ENCODE measurements at regions of chr18 and their contacts with region 1.

Region 1: DNA sequence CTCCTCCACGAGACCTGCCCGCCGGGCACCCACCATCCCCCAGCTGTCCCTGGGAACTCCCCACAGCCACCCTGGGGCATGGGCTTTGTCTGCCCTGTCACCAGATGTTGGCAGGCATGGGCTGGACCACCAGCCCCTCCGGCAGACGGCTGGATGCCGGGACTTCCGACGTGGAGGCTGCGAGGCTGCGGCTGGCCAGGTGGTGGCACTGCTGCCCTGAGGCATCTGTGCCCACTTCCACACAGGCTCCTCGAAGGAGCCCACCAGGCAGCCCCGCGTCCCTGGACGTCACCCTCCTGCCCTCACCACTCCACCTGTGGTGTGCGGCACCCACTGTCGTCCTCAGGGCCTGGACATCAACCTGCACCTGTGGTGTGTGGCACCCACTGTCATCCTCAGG is 319.9 kb upstream of the SALL3 start:
- DNase-seq: no peak
- H3K4me3 ChIP-seq: no peak overlapping the region
- H3K27ac ChIP-seq: no peak overlapping the region
- H3K27me3 ChIP-seq: peaks cover 0 to 19% (median 0%) of the 10 kb centered on the region in 45 donors
- CTCF ChIP-seq: peak in 54 of 56 donors; percentile 29 to 76 (median 60)

Region 2: DNA sequence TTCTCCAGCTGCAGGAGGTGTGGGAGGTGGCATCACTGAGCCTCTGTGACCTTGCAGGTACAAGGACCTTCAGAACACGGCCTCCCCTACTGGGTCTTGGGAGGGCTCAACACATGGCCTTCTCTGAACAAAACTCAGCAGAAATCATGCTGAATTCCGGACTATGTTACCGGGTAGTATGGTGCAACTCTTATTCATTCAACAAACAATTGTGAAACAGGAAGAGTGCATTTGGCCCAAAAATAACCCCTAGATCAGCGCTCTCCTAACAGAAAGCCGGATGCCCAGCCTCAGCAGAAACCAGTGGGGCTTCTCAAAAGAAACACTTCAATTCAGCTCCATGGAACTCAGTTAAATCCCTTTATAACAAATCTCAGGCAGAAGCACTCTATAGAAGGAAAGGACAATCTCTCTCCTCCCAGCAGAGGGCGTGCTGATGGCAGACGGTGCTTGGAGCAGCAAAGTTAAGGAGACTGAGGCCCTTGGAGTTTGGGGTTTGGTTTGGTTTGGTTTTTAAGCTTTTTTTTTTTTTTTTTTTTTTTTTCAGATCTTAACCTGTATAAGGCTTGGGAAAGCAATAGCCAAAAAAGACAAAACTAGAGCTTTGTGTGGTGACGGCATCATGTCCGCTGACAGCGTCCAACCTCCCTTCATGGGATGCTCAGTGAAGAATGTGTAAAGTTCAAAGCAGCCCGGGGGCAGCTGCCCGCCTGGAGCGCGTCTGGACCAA is 215.7 kb after region 1 on chr18:
- intact Hi-C with region 1: loop called in 1 of 2 experiments (anchors 10 kb)
- DNase-seq: peak in 3 of 10 donors; percentile 24 to 51 (median 40)
- H3K4me3 ChIP-seq: no peak overlapping the region
- H3K27ac ChIP-seq: no peak overlapping the region
- H3K27me3 ChIP-seq: peaks cover 0 to 9% (median 0%) of the 10 kb centered on the region in 45 donors
- CTCF ChIP-seq: peak in 54 of 56 donors; percentile 12 to 65 (median 46)

Region 3: DNA sequence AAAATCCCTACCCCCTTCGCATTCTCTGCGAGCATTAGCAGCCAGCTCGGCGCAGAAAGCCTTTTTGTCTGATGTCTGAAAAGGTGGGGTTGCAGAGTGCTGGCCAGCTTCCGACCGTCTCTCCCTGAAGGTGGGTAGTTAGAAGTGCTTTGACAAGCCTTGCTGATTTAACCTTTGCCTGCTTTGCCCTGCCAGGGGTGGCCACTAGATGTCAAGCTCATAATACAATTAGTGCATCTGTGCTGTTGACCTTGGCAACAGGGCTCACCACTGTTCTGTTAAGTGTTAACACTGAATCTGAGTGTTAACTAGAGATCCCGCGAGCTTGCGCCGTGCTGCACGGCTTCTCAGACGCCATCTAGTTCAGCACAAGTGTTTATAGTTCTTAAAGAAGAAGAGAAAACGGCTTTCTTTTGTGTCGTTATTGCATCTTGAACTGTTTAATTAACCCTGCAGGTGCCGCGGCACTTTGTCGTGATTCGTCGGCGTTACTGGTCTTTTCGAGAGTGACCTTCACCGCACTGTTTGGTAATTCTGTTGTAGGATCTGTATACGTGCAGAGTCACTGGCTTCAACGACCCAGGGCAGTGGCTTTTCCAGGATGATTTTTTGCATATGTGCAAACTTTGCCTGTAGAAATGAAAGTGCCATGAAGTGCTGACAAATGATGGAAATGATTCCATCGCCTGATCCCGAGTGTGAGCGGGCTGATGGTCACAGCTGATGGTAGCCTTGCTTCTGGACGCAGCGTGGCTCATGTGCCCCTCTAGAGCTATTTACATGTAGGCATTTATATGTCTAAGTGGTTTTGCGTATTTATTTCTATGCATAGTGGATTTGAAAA is 325.4 kb after region 1 on chr18:
- intact Hi-C with region 1: loop called in 1 of 2 experiments (anchors 5 kb)
- DNase-seq: peak in 2 of 10 donors; percentile 18 to 36
- H3K4me3 ChIP-seq: peak overlapping the region in 46 of 59 donors; percentile 1 to 53 (median 30)
- H3K27ac ChIP-seq: peak overlapping the region in 34 of 59 donors; percentile 1 to 70 (median 25)
- H3K27me3 ChIP-seq: peaks cover 8 to 100% (median 82%) of the 10 kb centered on the region in 45 donors
- CTCF ChIP-seq: peak in 11 of 56 donors; percentile 9 to 19 (median 12)